ENCODE measurements at regions of chr20 and their contacts with region 1.

Region 1: DNA sequence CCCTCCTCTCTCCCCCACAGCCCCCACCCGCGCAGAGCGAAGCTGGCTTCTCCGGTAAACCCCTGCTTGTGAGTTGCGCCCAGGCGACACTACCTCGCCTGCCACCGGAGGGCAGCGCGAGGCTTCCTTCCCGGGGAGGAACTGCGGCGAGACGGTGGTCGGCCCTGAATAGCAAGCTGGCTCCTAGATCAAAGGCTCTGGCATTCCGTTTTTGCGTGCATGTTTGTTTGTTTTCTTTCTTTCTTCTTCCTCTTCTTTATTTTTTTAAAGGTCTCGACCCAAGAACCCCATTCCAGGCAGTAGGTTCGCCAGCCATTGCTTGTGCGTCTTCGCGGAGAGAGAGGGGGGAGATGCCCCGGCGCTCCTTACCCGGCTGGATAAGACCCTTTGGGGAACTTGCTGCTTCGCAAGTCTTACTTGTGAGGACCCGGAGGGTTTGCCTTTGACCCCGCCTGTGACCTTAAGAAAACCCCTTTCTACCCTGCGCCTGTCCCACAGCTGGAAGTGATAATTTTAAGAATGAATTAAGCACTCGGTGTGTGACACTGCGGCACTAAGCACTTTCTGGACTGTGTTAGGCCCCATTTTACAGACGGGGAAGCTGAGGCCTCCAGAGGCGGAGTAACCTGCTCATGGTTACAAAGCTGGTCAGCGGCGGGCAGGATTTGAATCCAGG is 92.7 kb upstream of the SIRPA start:
- DNase-seq: peak; percentile 87
- H3K4me3 ChIP-seq: peak overlapping the region; percentile 43 to 55
- H3K27ac ChIP-seq: no peak overlapping the region
- H3K4me1 ChIP-seq: peaks cover 7 to 10% of the 10 kb centered on the region in 2 experiments; a peak in 2 of 4 replicates
- H3K27me3 ChIP-seq: no peaks in the 10 kb centered on the region
- CTCF ChIP-seq: peak; percentile 74
- EP300 ChIP-seq: no peak
- RAD21 ChIP-seq: peak; percentile 77

Region 2: GRCh38 chr20:1764136-1765033 is 38.1 kb before region 1 on chr20:
- CTCF ChIA-PET with region 1: interaction called, 20 read pairs
- POLR2A ChIA-PET with region 1: no interaction called
- DNase-seq: peak; percentile 65
- H3K4me3 ChIP-seq: no peak overlapping the region; a peak in 1 of 4 replicates
- H3K27ac ChIP-seq: no peak overlapping the region
- H3K4me1 ChIP-seq: peaks cover 6 to 13% of the 10 kb centered on the region in 2 experiments; a peak in 3 of 4 replicates
- H3K27me3 ChIP-seq: no peaks in the 10 kb centered on the region
- CTCF ChIP-seq: peak; percentile 86
- EP300 ChIP-seq: no peak
- RAD21 ChIP-seq: peak; percentile 82

Region 3: GRCh38 chr20:1888796-1889463 is 86.4 kb after region 1 on chr20:
- CTCF ChIA-PET with region 1: interaction called, 15 read pairs
- POLR2A ChIA-PET with region 1: no interaction called
- DNase-seq: no peak
- H3K4me3 ChIP-seq: no peak overlapping the region
- H3K27ac ChIP-seq: no peak overlapping the region
- H3K4me1 ChIP-seq: no peaks in the 10 kb centered on the region; a peak in 1 of 4 replicates
- H3K27me3 ChIP-seq: no peaks in the 10 kb centered on the region
- CTCF ChIP-seq: no peak
- EP300 ChIP-seq: no peak
- RAD21 ChIP-seq: no peak

Region 4: DNA sequence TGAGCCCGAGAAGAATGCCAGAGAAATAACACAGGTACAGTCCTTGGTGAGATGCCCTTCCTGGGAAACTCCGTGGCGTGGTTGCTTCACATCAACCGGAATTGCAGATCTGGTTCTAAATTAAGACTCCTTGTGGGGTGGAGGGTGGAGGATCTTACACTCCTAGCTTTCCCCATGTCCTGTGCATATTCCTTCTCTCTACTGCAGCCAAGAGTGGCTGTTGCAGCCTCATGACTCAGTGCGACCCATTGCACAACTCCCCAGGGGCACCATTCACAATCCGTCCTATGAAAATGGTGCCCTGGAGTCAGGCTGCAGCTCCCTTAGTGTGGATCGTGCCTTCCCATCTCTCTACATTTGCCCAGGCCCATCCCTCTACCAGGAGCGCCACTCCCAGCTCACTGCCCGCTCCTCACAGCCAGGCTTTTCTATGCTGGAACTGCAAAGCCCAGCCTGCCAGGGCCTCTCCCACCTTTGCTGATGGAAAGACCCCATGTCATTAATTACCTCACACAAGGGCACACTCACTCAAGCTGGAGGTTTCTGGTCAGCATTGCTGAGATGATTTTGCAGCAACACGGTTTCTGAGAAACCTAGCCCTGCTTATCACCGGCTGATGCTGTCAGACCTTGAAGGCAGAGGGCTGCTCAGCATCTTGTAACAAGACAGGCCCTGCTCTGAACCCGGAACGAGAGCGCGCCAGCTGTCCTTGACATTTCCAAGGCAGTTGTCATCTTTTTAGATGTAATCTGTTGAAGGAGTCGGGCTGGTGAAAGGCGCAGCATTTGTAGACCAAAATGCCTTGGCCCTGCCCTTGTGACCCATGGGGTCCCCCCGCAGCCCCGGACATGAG is 132.4 kb after region 1 on chr20:
- CTCF ChIA-PET with region 1: interaction called, 15 read pairs
- POLR2A ChIA-PET with region 1: no interaction called
- DNase-seq: peak; percentile 60
- H3K4me3 ChIP-seq: no peak overlapping the region; a peak in 1 of 4 replicates
- H3K27ac ChIP-seq: peak overlapping the region in 1 of 2 experiments; percentile 84; a peak in 2 of 4 replicates
- H3K4me1 ChIP-seq: peaks cover 13 to 53% of the 10 kb centered on the region in 2 experiments; a peak in 3 of 4 replicates
- H3K27me3 ChIP-seq: no peaks in the 10 kb centered on the region
- CTCF ChIP-seq: no peak
- EP300 ChIP-seq: peak in 1 of 2 experiments; percentile 81; a peak in 1 of 4 replicates
- RAD21 ChIP-seq: no peak

Region 5: GRCh38 chr20:2093159-2093781 is 290.7 kb after region 1 on chr20:
- CTCF ChIA-PET with region 1: interaction called, 21 read pairs
- POLR2A ChIA-PET with region 1: no interaction called
- DNase-seq: peak; percentile 36
- H3K4me3 ChIP-seq: no peak overlapping the region; a peak in 1 of 4 replicates
- H3K27ac ChIP-seq: no peak overlapping the region
- H3K4me1 ChIP-seq: no peaks in the 10 kb centered on the region
- H3K27me3 ChIP-seq: peaks cover 26% of the 10 kb centered on the region
- CTCF ChIP-seq: peak; percentile 70
- EP300 ChIP-seq: no peak
- RAD21 ChIP-seq: peak; percentile 67